ENCODE measurements at regions of chr20 and their contacts with region 1.

Region 1: DNA sequence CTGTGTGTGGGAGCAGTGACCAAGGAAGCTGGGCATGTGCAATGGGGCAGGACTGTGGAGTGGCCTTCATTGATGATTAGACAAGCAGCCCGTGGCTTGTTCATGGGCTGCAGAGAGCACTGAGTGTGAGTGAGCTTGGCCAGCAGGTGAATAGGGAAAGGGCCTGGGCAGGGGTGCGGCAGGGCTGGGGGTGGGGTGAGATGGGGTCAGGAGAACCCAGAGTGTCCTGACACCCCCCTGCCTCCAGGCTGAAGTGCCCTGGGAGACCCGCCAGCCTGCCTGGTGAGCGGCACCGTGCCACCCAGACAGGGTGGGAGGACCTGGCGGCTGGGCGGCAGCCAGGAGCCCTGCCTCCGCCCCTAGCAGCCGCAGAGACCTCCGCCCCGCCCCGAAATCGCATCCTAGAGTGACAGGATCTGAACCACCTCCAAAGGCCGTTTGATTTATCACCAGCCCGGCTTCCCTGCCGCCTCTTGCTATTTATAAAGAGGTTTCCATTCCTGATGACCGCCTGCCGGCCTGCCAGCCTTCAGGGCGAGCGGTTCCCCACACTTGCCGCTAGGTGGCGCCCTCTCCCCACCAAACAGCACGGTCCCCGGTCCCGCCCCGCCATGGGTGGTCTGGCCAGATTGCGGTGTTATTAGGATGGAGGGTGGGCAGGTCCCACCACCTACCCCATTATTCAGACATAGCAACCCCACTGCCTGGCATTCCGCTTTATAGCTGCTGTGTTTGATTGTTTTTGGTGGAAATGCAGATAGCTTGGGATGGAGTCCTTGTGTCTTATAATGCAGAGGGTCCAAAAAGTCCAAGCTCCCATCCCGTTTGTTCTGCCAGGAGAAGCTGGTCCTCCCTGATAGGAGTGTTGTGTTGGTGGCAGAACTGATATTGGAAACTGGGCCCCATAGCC is 3.5 kb downstream of the MYLK2 start:
- DNase-seq: peak; percentile 79
- ATAC-seq: peak; percentile 97
- H3K4me3 Mint-ChIP-seq: no peak overlapping the region
- H3K27ac Mint-ChIP-seq: no peak overlapping the region
- H3K4me1 Mint-ChIP-seq: peaks cover 4% of the 10 kb centered on the region
- H3K27me3 Mint-ChIP-seq: no peaks in the 10 kb centered on the region
- CTCF ChIP-seq: peak; percentile 92

Region 2: GRCh38 chr20:31845300-31845863 is 22.7 kb after region 1 on chr20 and contains the start of gene FOXS1:
- CTCF ChIA-PET with region 1: interaction called, 43 read pairs
- POLR2A ChIA-PET with region 1: no interaction called
- intact Hi-C with region 1: loop called (anchors 1 kb)
- DNase-seq: no peak
- ATAC-seq: no peak
- H3K4me3 Mint-ChIP-seq: no peak within 1 kb of the TSS
- H3K27ac Mint-ChIP-seq: no peak within 1 kb of the TSS
- H3K4me1 Mint-ChIP-seq: no peaks in the 10 kb centered on the region
- H3K27me3 Mint-ChIP-seq: peaks cover 10% of the 10 kb centered on the region
- CTCF ChIP-seq: no peak
- total RNA-seq, gene FOXS1: not detected in 2 replicates

Region 3: DNA sequence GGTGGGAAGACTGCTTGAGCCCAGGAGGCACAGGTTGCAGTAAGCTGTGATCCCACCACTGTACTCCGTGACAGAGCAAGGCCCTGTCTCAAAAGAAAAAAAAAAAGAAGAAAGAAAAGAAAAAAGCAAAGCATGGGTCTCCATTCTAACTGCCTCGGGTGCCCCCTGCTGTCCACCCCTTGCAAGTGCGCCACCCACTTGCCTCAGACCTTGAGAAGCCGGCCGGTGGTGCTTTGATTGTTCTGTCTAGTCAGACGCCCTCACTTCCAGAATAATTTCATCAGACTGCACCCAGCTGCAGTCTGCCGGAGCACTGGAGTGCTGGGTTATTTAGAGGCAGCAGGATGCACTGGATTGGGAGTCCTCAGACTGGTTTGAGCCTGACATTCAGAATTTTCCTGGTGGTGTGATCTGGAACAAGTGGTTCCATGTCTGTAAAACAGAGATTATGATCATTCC is 269.2 kb after region 1 on chr20:
- CTCF ChIA-PET with region 1: interaction called, 15 read pairs
- POLR2A ChIA-PET with region 1: no interaction called
- intact Hi-C with region 1: loop called (anchors 1 kb)
- DNase-seq: peak; percentile 68
- ATAC-seq: peak; percentile 92
- H3K4me3 Mint-ChIP-seq: no peak overlapping the region
- H3K27ac Mint-ChIP-seq: no peak overlapping the region
- H3K4me1 Mint-ChIP-seq: peaks cover 14% of the 10 kb centered on the region
- H3K27me3 Mint-ChIP-seq: no peaks in the 10 kb centered on the region
- CTCF ChIP-seq: peak; percentile 70

Region 4: DNA sequence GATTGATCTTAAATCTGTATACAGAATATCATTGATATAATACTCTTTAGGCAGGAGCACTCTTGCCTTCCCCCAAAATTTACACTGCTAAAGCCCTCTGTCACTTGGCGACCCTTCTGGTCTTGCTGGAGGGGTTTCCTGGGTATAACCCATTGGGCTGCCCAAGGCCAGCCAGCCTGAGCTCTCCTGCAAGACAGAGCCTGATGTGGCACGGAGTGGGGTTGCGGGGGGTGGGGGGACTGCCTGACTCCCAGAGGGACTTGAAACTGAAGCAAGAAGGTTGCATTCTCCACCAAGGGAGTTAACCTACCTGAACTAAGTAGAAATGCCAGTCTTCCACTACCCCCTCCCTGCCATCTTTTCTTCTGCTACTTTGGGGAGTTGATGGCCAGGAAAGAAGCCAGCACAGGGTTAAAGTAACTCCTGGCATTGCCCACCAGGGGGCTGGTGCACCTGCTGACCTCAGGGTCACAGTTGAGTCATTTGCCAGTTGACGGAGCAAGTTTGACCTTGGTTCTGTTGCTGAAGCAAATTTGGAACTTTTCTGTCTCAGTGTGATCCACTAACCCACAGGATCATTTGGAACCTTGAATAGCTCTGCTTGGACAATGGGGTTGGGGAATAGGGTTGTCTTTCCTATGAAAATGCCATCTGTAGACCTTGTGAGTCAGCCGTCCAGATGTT is 614.9 kb after region 1 on chr20:
- CTCF ChIA-PET with region 1: no interaction called
- POLR2A ChIA-PET with region 1: no interaction called
- intact Hi-C with region 1: no loop called
- DNase-seq: no peak
- ATAC-seq: peak; percentile 62
- H3K4me3 Mint-ChIP-seq: no peak overlapping the region
- H3K27ac Mint-ChIP-seq: no peak overlapping the region
- H3K4me1 Mint-ChIP-seq: peaks cover 3% of the 10 kb centered on the region
- H3K27me3 Mint-ChIP-seq: no peaks in the 10 kb centered on the region
- CTCF ChIP-seq: no peak